BJ (cell line): ENCODE measurements at regions of chr2 and their contacts with region 1.

Region 1: GRCh38 chr2:168118733-168119514 is 128.5 kb downstream of the STK39 start:
- DNase-seq: peak; percentile 14
- H3K4me3 ChIP-seq: no peak overlapping the region
- H3K27me3 ChIP-seq: no peaks in the 10 kb centered on the region
- CTCF ChIP-seq: peak; percentile 68

Region 2: DNA sequence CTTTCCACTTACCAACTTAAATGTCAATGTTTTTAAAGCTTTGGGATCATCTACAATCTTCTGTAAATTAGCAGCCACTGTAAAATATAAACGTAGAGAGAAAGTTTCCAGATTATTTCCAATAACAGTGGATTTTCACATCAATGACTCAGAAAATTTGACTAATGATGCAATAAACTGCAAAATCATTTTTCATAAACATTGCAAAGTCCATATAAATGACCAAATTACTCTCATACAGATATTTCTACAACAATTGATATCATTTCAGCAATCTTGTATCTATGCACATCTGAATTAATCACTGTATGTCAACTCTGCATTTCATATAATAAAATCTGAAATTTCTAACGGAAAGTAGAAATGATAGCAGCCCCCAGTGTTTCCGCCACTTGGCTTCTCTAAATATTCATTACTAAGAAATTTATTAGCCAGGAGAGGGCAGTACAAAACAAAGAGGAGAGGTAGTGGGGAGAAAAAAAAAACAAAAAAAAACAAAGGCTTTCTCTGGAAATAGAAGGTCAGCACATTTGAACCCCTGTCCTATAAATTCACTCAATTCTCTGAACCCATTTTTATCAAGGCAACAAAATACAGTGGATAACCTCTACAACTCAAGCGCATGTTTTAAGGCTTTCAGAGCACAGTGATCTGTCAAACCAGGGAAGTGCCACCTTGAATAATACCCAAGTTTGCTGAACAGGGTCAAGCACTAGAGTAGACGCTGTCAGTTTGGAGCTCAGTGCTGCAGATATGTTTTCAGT is 154.1 kb before region 1 on chr2:
- CTCF ChIA-PET with region 1: interaction called, 101 read pairs
- POLR2A ChIA-PET with region 1: interaction called, 6 read pairs
- DNase-seq: no peak
- H3K4me3 ChIP-seq: no peak overlapping the region
- H3K27me3 ChIP-seq: no peaks in the 10 kb centered on the region
- CTCF ChIP-seq: peak; percentile 33; the same call in 1 of the 2 replicates

Region 3: DNA sequence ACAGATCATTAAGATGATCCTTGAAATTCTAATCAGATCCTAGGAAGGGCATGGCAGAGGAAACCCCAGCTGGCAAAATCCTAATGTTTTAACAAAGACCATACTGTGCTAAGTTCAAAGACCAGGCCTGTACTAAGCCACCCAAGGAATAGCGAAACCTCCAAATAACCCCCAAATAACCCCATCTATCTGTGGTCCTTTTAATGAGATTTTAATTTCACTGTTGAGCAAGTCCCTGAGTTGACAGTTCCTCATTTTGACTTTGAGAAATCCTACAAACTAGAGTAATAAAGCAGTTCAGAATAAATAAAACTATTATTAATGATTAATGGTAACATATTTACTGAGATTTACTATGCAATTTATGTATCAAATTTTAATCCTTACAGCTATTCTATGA is 131.4 kb before region 1 on chr2:
- CTCF ChIA-PET with region 1: interaction called, 10 read pairs
- POLR2A ChIA-PET with region 1: no interaction called
- DNase-seq: no peak
- H3K4me3 ChIP-seq: no peak overlapping the region
- H3K27me3 ChIP-seq: no peaks in the 10 kb centered on the region
- CTCF ChIP-seq: no peak

Region 4: GRCh38 chr2:168075446-168075845 is 43.5 kb before region 1 on chr2:
- CTCF ChIA-PET with region 1: no interaction called
- POLR2A ChIA-PET with region 1: no interaction called
- DNase-seq: no peak
- H3K4me3 ChIP-seq: no peak overlapping the region
- H3K27me3 ChIP-seq: no peaks in the 10 kb centered on the region
- CTCF ChIP-seq: no peak

Region 5: GRCh38 chr2:168107322-168107721 is 11.6 kb before region 1 on chr2:
- CTCF ChIA-PET with region 1: interaction called, 32 read pairs
- POLR2A ChIA-PET with region 1: no interaction called
- DNase-seq: no peak
- H3K4me3 ChIP-seq: no peak overlapping the region
- H3K27me3 ChIP-seq: no peaks in the 10 kb centered on the region
- CTCF ChIP-seq: no peak

Region 6: DNA sequence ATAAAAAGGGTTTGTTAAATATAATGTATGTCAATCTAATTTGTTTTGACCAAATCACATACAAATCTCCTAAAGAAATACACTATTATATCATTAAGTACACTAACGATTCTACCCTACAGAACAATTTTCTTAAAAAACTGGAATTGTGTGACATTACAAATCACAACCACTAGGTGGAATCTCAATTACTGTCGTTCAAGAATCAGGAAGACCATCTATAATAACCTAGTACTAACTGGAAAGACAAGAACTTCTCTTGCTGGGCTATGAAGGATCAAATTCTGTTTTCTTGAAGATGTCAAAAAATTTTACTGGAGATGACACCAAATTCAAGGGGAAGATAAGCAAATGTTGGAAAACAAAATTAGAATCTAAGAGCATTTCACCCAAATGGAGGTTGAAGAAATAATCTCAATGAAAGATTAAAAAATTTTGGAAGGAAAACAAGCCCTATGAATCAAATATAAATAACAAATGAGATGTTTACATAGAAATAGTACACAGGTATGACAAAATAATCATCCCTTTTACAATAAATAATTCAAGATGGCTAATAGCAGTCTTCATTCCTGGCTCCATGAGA is 17.6 kb after region 1 on chr2:
- CTCF ChIA-PET with region 1: interaction called, 14 read pairs
- POLR2A ChIA-PET with region 1: no interaction called
- DNase-seq: no peak
- H3K4me3 ChIP-seq: no peak overlapping the region
- H3K27me3 ChIP-seq: no peaks in the 10 kb centered on the region
- CTCF ChIP-seq: peak; percentile 41